ENCODE measurements at regions of chr3 and their contacts with region 1.

Region 1: DNA sequence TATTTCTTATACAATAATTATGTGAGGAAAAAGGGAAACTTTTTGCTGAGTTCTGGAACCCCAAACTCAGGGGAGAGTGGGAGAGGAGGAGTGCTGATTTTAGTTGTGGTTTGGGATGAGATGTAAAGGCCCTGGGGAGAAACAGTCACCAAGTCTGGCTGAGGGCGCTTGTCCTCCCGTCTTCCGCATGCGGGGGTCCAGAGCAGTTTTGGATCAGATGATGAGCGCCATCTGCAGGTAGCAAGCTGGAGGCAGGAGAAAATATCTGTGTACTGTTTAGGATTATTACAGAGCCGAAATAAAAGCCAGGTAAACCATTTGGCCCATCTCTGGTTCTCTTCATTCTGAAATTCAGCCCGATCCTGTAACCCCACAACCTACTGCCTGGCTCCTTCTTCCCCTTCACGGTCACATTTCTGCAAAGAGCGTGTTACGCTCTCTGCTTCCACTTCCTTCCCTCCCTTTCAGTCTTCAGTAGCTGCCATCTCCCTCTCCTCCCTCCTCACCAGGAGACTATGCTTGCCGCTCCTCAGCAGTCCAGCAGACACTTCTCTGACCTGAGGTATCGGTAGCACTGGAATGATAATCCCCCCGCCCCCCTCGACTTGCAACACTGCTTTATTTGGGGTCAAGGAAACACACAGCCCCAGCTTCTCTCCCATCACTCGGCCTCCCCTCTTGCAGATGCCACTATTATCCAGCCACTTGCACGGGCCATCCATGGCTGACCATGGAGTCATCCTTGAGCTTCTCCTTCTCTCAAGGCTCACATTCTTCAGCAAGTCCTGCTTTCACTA is 1.4 kb upstream of the PARP14 start:
- DNase-seq: peak; percentile 77
- ATAC-seq: peak; percentile 62
- H3K4me3 Mint-ChIP-seq: peak overlapping the region; percentile 96
- H3K27ac Mint-ChIP-seq: peak overlapping the region; percentile 96
- H3K4me1 Mint-ChIP-seq: peaks cover 45% of the 10 kb centered on the region
- H3K27me3 Mint-ChIP-seq: no peaks in the 10 kb centered on the region

Region 2: DNA sequence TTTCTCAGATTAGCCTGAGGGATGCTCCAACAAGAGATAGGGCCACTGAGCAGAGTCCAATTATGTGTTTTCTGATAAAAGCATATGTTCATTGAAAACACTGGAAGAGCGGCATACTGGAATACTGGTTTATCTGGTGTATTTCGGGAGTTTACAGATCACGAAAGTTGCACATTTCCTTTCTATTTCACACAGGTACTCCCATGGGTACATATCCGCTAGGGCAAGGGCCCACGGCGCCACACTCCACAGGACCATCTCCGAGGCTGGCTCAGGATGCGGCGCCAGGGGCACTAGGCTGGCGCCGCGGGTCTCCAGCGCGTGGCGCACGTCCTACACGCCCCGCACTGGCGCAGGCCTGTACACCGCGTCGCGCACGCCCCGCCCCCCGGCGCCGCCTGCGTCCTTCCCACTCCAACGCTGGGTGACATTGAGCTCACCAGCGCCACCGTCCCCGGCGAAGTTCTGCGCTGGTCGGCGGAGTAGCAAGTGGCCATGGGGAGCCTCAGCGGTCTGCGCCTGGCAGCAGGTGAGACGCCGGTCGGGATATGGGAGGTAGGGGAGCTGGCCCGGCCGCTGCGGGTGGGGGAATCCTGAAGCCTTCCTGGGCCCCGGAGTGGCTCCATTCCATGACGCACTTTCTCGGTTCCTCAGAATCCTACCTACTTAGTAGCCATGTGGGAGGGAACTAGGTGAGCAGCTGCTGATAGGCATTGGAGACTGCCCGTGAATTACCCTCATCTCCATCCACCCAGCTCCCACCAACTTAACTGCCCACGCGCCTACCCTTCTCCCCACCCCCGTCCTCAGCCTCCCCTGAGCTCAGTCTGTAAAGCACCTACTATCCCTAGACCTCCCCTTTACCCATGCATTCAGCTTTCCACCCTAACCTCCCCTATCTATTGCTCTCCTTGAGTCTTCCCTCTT is 295.2 kb before region 1 on chr3 and contains the start of gene FAM162A:
- POLR2A ChIA-PET with region 1: interaction called, 14 read pairs
- DNase-seq: peak; percentile 96
- ATAC-seq: peak; percentile 99
- H3K4me3 Mint-ChIP-seq: peak within 1 kb of the TSS; percentile 96
- H3K27ac Mint-ChIP-seq: peak within 1 kb of the TSS; percentile 90
- H3K4me1 Mint-ChIP-seq: peaks cover 51% of the 10 kb centered on the region
- H3K27me3 Mint-ChIP-seq: no peaks in the 10 kb centered on the region
- total RNA-seq, gene FAM162A: 122 to 123 TPM

Region 3: DNA sequence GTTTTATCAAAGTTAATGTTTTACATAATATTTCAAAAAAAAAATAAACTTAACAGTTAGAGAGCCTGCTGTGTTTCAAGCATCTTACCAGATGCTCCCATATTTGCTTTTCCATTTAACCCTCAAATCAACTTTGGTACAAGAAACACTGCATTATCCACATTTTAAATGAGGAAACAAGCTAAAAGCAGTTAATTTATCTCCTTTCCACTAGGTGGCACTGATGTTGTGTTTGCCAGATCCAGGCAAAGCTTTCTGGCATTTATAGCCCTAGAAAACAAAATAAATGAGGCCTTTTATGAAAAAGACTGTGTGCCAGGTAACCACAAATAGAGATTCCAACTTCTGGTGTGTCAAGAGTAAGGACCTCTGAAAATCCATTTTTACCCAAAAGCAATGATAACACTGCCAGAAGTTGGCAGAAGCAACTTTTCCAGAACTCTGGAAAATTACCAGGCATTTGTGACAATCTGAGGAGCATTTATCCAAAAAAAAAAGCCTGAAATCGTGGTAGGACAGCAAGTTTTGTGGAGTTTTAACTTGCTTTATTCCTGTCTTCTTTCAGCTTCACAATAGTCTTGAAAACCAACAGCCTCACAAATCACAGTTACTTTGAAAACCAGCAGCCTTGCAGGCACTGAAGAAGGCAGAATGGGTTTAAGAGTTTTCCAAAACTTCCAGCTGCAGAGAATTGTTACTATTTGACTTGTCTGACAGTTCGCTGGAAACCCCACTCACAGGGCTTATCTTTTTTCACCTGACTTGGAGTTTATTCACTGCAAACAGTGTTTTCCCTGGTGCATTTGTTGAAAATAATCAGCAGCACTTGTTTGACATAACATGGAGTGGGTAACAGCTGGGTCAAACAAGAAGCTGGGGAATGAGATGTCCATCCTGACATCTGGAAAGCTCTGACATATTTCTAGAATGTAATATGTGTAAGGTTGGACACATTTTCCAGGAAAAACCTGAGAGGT is 286.1 kb before region 1 on chr3:
- POLR2A ChIA-PET with region 1: interaction called, 17 read pairs
- DNase-seq: no peak
- ATAC-seq: no peak
- H3K4me3 Mint-ChIP-seq: no peak overlapping the region
- H3K27ac Mint-ChIP-seq: no peak overlapping the region
- H3K4me1 Mint-ChIP-seq: peaks cover 32% of the 10 kb centered on the region
- H3K27me3 Mint-ChIP-seq: no peaks in the 10 kb centered on the region

Region 4: DNA sequence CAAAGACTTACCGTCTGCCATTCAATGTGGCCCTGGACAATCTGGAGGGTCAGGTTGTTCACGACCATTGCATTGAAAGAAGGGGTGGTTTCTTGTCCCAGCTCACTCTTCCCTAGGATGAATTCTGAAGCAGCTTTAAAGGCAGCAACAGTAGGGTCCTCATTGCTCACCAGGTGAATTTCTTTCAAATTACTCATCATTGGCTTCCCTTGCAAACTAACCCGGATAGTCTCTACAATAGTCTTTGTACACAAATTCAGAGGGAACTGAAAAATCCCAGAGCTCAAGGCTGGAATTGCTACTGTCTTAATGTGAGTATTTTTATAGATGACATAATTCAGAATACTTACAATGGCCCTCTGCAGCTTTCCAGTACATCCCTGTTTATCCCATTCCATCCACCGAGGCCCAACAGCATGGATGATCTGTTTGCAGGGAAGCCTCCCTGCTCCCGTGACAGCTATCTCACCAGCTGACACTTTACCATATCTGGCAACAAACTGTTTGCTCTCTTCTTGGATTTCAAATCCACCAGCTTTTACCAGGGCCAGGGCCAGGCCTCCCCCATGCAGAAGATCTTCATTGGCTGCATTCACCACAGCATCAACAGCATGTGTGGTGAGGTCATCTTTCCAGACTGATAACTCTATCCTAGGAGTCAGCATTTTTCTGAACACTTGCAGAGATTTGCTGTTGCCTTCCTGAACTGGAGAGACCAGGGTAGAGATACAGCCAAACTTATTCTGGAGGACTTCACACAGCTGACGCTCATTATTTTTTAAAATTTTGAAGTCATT is 123.8 kb before region 1 on chr3:
- POLR2A ChIA-PET with region 1: interaction called, 15 read pairs
- DNase-seq: no peak
- ATAC-seq: no peak
- H3K4me3 Mint-ChIP-seq: no peak overlapping the region
- H3K27ac Mint-ChIP-seq: peak overlapping the region; percentile 22
- H3K4me1 Mint-ChIP-seq: peaks cover 28% of the 10 kb centered on the region
- H3K27me3 Mint-ChIP-seq: no peaks in the 10 kb centered on the region

Region 5: GRCh38 chr3:122564155-122564912 is 114.9 kb before region 1 on chr3 and contains the starts of genes DTX3L and PARP9:
- POLR2A ChIA-PET with region 1: interaction called, 160 read pairs
- DNase-seq: peak; percentile 93
- ATAC-seq: peak; percentile 95
- H3K4me3 Mint-ChIP-seq: peak within 1 kb of the TSS; percentile 97
- H3K27ac Mint-ChIP-seq: peak within 1 kb of the TSS; percentile 100
- H3K4me1 Mint-ChIP-seq: peaks cover 51% of the 10 kb centered on the region
- H3K27me3 Mint-ChIP-seq: no peaks in the 10 kb centered on the region
- total RNA-seq, gene DTX3L: 116 to 117 TPM
- total RNA-seq, gene PARP9: 107 to 114 TPM

Region 6: DNA sequence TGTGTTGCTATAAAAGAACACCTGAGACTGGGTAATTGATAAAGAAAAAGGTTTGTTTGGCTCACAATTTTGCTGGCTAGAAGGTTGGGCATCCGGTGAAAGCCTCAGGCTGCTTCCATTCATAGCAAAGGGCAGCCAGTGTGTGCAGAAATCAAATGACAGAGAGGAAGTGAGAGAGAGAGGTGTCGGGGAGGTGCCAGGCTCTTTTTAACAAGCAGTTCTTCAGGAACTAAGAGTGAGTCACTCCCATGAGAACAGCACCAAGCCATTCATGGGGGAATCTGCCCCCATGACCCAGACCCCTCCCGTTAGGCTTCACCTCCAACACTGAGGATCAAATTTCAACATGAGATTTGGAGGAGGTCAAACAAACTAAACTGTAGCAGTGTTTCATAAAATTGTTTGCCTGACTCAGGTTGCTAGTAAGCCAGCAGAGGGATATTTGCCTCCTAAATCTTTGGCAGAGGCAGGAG is 106.3 kb before region 1 on chr3:
- POLR2A ChIA-PET with region 1: interaction called, 27 read pairs
- DNase-seq: no peak
- ATAC-seq: peak; percentile 57
- H3K4me3 Mint-ChIP-seq: peak overlapping the region; percentile 18
- H3K27ac Mint-ChIP-seq: peak overlapping the region; percentile 82
- H3K4me1 Mint-ChIP-seq: peaks cover 54% of the 10 kb centered on the region
- H3K27me3 Mint-ChIP-seq: no peaks in the 10 kb centered on the region

Region 7: DNA sequence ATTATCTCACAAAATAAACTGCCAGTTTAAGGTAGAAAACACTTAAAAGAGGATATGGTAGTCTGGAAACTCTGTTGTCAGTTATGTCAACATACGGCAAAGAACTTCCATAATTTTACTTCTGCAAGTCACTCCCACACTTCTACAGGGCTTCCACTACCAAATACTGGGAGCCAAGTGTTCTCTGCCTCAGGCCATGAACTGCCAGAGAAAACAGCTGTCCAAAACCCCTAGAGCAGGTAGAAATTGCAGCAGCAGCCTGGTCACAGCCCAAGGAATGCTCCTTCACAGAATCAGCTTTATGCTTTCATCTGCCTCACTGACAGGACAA is 88.7 kb after region 1 on chr3:
- POLR2A ChIA-PET with region 1: no interaction called
- DNase-seq: no peak
- ATAC-seq: no peak
- H3K4me3 Mint-ChIP-seq: no peak overlapping the region
- H3K27ac Mint-ChIP-seq: no peak overlapping the region
- H3K4me1 Mint-ChIP-seq: peaks cover 3% of the 10 kb centered on the region
- H3K27me3 Mint-ChIP-seq: no peaks in the 10 kb centered on the region